ENCODE measurements at regions of chr16 and their contacts with region 1.

Region 1: GRCh38 chr16:4307215-4308037 is 8.4 kb upstream of the GLIS2 start:
- DNase-seq: peak; percentile 97
- H3K4me3 Mint-ChIP-seq: peak overlapping the region; percentile 93
- H3K27ac Mint-ChIP-seq: peak overlapping the region; percentile 92
- H3K4me1 Mint-ChIP-seq: peaks cover 30% of the 10 kb centered on the region
- H3K27me3 Mint-ChIP-seq: no peaks in the 10 kb centered on the region

Region 2: GRCh38 chr16:4271176-4272066 is 36.0 kb before region 1 on chr16:
- CTCF ChIA-PET with region 1: interaction called, 5 read pairs
- POLR2A ChIA-PET with region 1: interaction called, 43 read pairs
- DNase-seq: peak; percentile 93
- H3K4me3 Mint-ChIP-seq: peak overlapping the region; percentile 81
- H3K27ac Mint-ChIP-seq: peak overlapping the region; percentile 89
- H3K4me1 Mint-ChIP-seq: peaks cover 22% of the 10 kb centered on the region
- H3K27me3 Mint-ChIP-seq: peaks cover 3% of the 10 kb centered on the region

Region 3: DNA sequence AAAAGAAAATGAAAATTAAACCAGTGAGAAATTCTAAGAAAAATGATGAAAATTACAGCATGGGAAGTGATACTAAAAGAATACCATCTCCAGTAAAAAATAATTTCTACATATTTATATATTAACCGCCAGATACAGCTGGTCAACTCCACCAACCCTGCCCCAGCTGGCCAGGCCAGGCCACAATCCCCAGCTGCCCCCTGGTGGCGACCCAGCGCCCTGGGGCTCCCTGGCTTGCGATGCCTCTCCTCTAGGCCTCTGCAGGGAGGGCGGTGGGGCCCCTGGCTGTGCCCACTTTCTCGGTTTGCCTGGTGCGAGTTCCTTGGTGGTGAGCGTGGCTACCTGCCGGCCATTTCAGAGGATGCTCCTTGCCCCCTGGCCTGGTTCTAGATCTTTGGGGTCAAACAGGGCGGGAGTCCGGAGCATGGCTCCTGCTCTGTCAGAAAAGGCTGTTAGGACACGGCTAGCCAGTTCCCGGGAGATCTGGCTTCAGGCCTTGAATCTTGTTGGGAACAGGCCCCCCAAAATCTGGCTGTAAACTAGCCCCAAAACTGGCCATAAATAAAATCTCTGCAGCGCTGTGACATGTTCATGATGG is 22.9 kb after region 1 on chr16:
- CTCF ChIA-PET with region 1: interaction called, 23 read pairs
- POLR2A ChIA-PET with region 1: interaction called, 7 read pairs
- DNase-seq: peak; percentile 75
- H3K4me3 Mint-ChIP-seq: no peak overlapping the region
- H3K27ac Mint-ChIP-seq: no peak overlapping the region
- H3K4me1 Mint-ChIP-seq: no peaks in the 10 kb centered on the region
- H3K27me3 Mint-ChIP-seq: peaks cover 15% of the 10 kb centered on the region

Measured in activated CD4-positive, alpha-beta memory T cell treated with anti-CD3 and anti-CD28 coated beads, Interleukin-2, amount 10 ng/mL, durations not matched to agents 7 days and 5 days (primary cell).